ENCODE measurements at regions of chr14 and their contacts with region 1.

Region 1: DNA sequence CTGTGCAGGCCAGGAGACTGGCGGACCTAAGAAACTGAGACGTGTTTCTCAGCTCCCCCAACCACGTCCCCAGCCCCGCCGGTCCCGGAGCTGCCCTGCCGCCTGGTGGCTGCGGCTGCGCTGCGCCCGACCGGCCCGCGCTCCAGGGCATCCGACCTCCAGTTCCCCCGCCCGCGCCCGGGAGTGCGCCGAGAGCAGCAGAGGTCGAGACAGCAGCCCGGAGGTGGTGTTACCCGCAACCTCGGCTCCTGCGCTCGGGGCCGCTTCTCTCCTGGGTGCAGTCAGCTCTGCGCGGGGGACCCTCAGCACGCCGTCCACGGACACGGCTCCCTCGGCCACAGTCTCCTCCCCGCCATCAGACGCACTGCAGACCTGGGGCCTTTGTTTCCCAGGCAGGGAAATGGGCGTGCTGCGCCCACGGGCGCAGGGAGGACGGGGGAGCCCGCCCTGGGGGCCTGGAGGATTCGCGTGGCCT is 21.6 kb upstream of the GPR132 start:
- DNase-seq: peak; percentile 80 to 83
- ATAC-seq: peak; percentile 57 to 68 (median 60)
- H3K4me3 ChIP-seq: peak overlapping the region; percentile 57
- H3K27ac ChIP-seq: no peak overlapping the region
- H3K4me1 ChIP-seq: no peaks in the 10 kb centered on the region
- H3K27me3 ChIP-seq: peaks cover 0 to 35% (median 9%) of the 10 kb centered on the region in 3 donors
- CTCF ChIP-seq: peak; percentile 70

Region 2: GRCh38 chr14:104926619-104927431 is 160.0 kb before region 1 on chr14:
- intact Hi-C with region 1: no loop called
- DNase-seq: no peak
- ATAC-seq: no peak
- H3K4me3 ChIP-seq: no peak overlapping the region
- H3K27ac ChIP-seq: no peak overlapping the region
- H3K4me1 ChIP-seq: no peaks in the 10 kb centered on the region
- H3K27me3 ChIP-seq: peaks cover 0 to 20% (median 6%) of the 10 kb centered on the region in 3 donors
- CTCF ChIP-seq: no peak

Region 3: DNA sequence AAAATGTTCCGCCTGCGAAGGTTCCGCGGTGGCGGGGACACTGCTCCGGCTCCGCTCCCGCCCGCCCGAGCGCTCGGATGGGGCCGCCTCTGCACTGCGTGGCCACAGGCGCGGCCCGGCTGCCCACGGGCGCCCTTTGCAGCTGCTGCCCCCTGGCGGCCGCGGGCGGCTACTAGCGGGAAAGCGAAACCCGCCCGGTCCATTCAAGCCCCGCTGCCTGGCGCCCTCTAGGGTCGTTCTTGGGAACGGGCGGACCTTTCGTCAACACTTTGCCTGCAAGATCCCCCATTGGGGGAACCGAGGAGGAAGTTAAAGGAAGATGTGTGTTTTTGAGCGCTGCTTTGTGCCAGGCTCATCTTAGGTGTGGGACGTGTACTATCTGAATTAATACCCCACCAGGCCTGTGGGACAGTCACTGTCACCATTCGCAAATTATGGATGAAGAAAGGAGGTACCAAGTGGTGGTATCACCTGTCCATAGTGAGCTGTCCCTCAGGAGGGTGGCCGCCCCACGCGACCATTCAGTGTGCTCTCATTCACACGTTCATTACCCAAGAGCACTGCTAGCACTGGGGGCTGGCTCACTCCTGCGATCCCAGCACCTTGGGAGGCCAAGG is 41.1 kb before region 1 on chr14:
- intact Hi-C with region 1: no loop called
- DNase-seq: peak; percentile 91 to 94
- ATAC-seq: peak; percentile 95 to 99 (median 97)
- H3K4me3 ChIP-seq: peak overlapping the region; percentile 18
- H3K27ac ChIP-seq: no peak overlapping the region
- H3K4me1 ChIP-seq: no peaks in the 10 kb centered on the region
- H3K27me3 ChIP-seq: peaks cover 0 to 6% (median 6%) of the 10 kb centered on the region in 3 donors
- CTCF ChIP-seq: peak; percentile 100

Region 4: GRCh38 chr14:105168979-105169507 is 82.2 kb after region 1 on chr14:
- intact Hi-C with region 1: loop called in 1 of 2 experiments (anchors 5 kb)
- DNase-seq: no peak
- ATAC-seq: peak in 3 of 4 donors; percentile 2 to 4 (median 2)
- H3K4me3 ChIP-seq: peak overlapping the region; percentile 56
- H3K27ac ChIP-seq: peak overlapping the region; percentile 82
- H3K4me1 ChIP-seq: peaks cover 59% of the 10 kb centered on the region
- H3K27me3 ChIP-seq: no peaks in the 10 kb centered on the region
- CTCF ChIP-seq: peak; percentile 40

Region 5: GRCh38 chr14:105203057-105203531 is 116.2 kb after region 1 on chr14:
- intact Hi-C with region 1: loop called (anchors 5 kb)
- DNase-seq: peak; percentile 80 to 88
- ATAC-seq: peak; percentile 62 to 82 (median 70)
- H3K4me3 ChIP-seq: no peak overlapping the region
- H3K27ac ChIP-seq: no peak overlapping the region
- H3K4me1 ChIP-seq: peaks cover 24% of the 10 kb centered on the region
- H3K27me3 ChIP-seq: peaks cover 0 to 20% (median under 1%) of the 10 kb centered on the region in 3 donors
- CTCF ChIP-seq: peak; percentile 94

Region 6: GRCh38 chr14:105281371-105282097 is 194.7 kb after region 1 on chr14:
- intact Hi-C with region 1: loop called in 1 of 2 experiments (anchors 2 kb)
- DNase-seq: no peak
- ATAC-seq: peak; percentile 75 to 84 (median 78)
- H3K4me3 ChIP-seq: no peak overlapping the region
- H3K27ac ChIP-seq: peak overlapping the region; percentile 33
- H3K4me1 ChIP-seq: peaks cover 17% of the 10 kb centered on the region
- H3K27me3 ChIP-seq: no peaks in the 10 kb centered on the region
- CTCF ChIP-seq: peak; percentile 69

Region 7: GRCh38 chr14:105358140-105358846 is 271.4 kb after region 1 on chr14:
- intact Hi-C with region 1: loop called in 1 of 2 experiments (anchors 5 kb)
- DNase-seq: no peak
- ATAC-seq: peak in 2 of 4 donors; percentile 15 to 26
- H3K4me3 ChIP-seq: no peak overlapping the region
- H3K27ac ChIP-seq: no peak overlapping the region
- H3K4me1 ChIP-seq: no peaks in the 10 kb centered on the region
- H3K27me3 ChIP-seq: no peaks in the 10 kb centered on the region
- CTCF ChIP-seq: no peak